ENCODE measurements at regions of chr1 and their contacts with region 1.

Region 1: GRCh38 chr1:154747740-154748404 is 122.2 kb downstream of the KCNN3 start:
- DNase-seq: no peak
- H3K4me3 ChIP-seq: no peak overlapping the region
- H3K27ac ChIP-seq: no peak overlapping the region
- H3K4me1 ChIP-seq: no peaks in the 10 kb centered on the region
- H3K27me3 ChIP-seq: peaks cover 41 to 46% of the 10 kb centered on the region in 2 experiments
- CTCF ChIP-seq: no peak
- POLR2A ChIP-seq: no peak

Region 2: GRCh38 chr1:154695985-154696384 is 51.9 kb before region 1 on chr1:
- CTCF ChIA-PET with region 1: no interaction called
- POLR2A ChIA-PET with region 1: no interaction called
- dilution Hi-C with region 1: no loop called
- intact Hi-C with region 1: loop called (anchors 5 kb)
- DNase-seq: peak; percentile 24
- H3K4me3 ChIP-seq: no peak overlapping the region
- H3K27ac ChIP-seq: no peak overlapping the region
- H3K4me1 ChIP-seq: no peaks in the 10 kb centered on the region
- H3K27me3 ChIP-seq: peaks cover 12 to 35% of the 10 kb centered on the region in 2 experiments
- CTCF ChIP-seq: peak in 1 of 2 donors; percentile 39
- POLR2A ChIP-seq: no peak

Region 3: GRCh38 chr1:154802982-154803920 is 55.4 kb after region 1 on chr1:
- CTCF ChIA-PET with region 1: no interaction called
- POLR2A ChIA-PET with region 1: no interaction called
- dilution Hi-C with region 1: no loop called
- intact Hi-C with region 1: no loop called
- DNase-seq: no peak
- H3K4me3 ChIP-seq: no peak overlapping the region
- H3K27ac ChIP-seq: no peak overlapping the region
- H3K4me1 ChIP-seq: no peaks in the 10 kb centered on the region
- H3K27me3 ChIP-seq: peaks cover 0 to 19% of the 10 kb centered on the region in 2 experiments
- CTCF ChIP-seq: no peak
- POLR2A ChIP-seq: no peak

Region 4: DNA sequence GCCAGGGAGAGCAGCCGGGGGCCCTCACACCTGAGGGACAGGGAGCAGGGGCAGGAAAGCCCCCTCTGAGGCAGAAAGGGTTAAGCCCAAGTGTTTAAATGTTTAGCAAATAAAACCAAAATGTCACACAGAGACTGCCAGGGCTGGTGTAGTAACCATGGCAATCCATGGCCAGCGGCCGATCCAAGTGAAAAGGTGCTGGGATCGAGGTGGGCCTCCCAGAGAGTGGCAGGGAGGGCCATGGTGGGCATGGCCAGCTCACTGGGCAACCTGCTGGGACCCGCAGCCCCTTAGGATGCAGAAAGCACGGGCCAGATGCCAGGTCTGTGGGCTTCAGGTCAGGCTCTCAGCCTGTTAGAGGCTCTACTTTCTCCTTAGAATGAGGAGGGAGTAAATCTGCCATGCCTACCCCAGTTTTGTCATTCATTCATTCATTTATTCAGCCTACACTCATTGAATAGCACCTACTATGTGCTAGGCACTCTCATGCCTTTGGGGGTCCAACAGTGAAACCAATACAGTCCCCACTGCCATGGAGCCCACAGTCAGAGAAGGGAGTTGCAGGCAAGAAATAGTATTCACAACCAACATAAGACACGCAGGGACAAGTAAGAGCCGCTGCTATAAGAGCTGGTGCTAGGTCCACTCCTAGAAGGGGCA is 66.1 kb after region 1 on chr1:
- CTCF ChIA-PET with region 1: no interaction called
- POLR2A ChIA-PET with region 1: no interaction called
- dilution Hi-C with region 1: no loop called
- intact Hi-C with region 1: no loop called
- DNase-seq: no peak
- H3K4me3 ChIP-seq: no peak overlapping the region
- H3K27ac ChIP-seq: no peak overlapping the region
- H3K4me1 ChIP-seq: peaks cover 9% of the 10 kb centered on the region
- H3K27me3 ChIP-seq: no peaks in the 10 kb centered on the region
- CTCF ChIP-seq: no peak
- POLR2A ChIP-seq: no peak

Measured in endothelial cell of umbilical vein (primary cell).